ENCODE measurements at regions of chr17 and their contacts with region 1.

Region 1: GRCh38 chr17:66737524-66737923 is 97.4 kb upstream of the CACNG5 start:
- DNase-seq: peak in 1 of 2 experiments; percentile 19
- H3K4me3 ChIP-seq: no peak overlapping the region
- H3K27ac ChIP-seq: no peak overlapping the region
- H3K4me1 ChIP-seq: peaks cover 0 to 4% (median 3%) of the 10 kb centered on the region in 4 experiments; a peak in 2 of 7 replicates
- H3K27me3 ChIP-seq: no peaks in the 10 kb centered on the region
- CTCF ChIP-seq: peak; percentile 78 to 83 (median 78)
- EP300 ChIP-seq: no peak
- POLR2A ChIP-seq: no peak
- RAD21 ChIP-seq: peak; percentile 88 to 92

Region 2: DNA sequence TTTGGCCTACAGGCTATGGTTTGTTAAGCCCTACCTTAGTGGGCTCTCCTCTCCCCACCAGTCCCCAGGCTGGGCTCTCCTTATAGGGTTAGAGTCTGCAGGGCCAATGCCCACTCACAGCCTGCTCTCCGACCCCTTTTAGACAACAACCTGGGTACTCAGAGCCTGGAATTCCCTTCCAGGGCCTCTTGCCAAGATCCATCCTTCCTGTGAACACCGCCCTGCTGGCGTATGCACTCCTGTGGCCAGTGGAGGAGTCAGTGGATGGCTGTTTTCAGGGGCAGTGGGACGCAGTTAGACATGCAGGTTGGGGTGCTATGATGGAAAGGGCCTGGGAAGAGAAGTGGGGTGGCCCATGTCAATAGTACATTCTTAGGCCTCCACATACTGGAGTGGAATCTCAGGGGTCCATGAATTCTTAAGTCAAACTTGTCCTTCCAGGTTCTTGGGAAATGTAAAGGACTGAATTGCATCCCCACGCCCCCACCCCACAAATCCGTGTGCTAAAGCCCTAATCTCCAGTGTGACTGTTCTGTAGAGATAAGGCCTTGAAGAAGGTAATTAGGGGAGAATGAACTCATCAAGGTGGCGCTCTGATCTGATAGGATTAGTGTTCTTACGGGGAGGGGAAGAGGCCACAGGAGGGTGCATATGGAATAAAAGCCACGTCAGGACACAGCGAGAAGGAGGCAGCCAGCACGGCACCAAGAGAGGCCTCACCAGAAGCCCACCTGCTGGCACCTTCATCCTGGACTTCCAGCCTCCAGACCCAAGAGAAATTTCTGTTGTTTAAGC is 15.8 kb after region 1 on chr17:
- CTCF ChIA-PET with region 1: interaction called, 10 read pairs
- POLR2A ChIA-PET with region 1: no interaction called
- DNase-seq: no peak
- H3K4me3 ChIP-seq: no peak overlapping the region
- H3K27ac ChIP-seq: no peak overlapping the region
- H3K4me1 ChIP-seq: peaks cover 0 to 2% (median 1%) of the 10 kb centered on the region in 4 experiments; a peak in 2 of 7 replicates
- H3K27me3 ChIP-seq: no peaks in the 10 kb centered on the region; a peak in 1 of 7 replicates
- CTCF ChIP-seq: no peak
- EP300 ChIP-seq: no peak
- POLR2A ChIP-seq: no peak
- RAD21 ChIP-seq: no peak

Region 3: DNA sequence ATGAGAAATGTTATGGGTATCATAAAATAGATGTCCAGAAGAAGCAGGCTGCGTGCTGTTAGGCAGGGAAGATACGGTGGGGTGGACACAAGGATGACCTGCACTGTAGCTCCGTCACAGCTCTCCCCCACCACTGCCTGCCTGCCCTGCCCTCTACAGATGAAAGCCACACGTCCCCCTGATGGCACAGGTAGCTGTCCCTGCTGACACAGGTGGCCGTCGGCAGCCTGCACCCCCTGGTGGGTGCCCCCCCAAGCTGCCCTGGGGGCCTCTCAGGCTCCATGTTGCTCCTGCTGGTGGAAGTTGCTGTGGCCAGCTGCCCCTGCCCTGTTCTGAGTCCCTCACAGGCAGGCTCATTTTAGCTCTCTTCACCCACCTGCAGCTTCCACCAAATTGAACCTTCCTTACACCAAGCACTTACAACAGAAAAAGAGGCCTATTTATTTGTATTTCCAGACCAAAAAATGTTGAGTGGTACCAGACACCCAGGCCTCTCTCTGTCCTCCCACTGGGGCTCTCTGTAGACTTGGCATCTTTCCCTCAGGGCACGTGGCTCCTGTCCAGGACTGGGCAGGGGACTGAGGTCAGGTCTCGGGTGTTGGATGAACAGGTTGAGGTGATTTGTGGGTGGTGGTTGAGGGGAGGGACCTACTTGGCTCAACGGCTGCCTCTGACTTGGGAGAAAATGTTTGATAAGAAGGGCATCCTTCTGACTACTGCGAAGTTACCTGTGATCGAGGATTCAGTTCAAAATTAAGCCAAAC is 47.3 kb after region 1 on chr17:
- CTCF ChIA-PET with region 1: interaction called, 10 read pairs
- POLR2A ChIA-PET with region 1: no interaction called
- DNase-seq: no peak
- H3K4me3 ChIP-seq: no peak overlapping the region
- H3K27ac ChIP-seq: no peak overlapping the region
- H3K4me1 ChIP-seq: peaks cover 0 to 15% (median 6%) of the 10 kb centered on the region in 4 experiments; a peak in 4 of 7 replicates
- H3K27me3 ChIP-seq: no peaks in the 10 kb centered on the region
- CTCF ChIP-seq: no peak
- EP300 ChIP-seq: no peak
- POLR2A ChIP-seq: no peak
- RAD21 ChIP-seq: no peak

Region 4: DNA sequence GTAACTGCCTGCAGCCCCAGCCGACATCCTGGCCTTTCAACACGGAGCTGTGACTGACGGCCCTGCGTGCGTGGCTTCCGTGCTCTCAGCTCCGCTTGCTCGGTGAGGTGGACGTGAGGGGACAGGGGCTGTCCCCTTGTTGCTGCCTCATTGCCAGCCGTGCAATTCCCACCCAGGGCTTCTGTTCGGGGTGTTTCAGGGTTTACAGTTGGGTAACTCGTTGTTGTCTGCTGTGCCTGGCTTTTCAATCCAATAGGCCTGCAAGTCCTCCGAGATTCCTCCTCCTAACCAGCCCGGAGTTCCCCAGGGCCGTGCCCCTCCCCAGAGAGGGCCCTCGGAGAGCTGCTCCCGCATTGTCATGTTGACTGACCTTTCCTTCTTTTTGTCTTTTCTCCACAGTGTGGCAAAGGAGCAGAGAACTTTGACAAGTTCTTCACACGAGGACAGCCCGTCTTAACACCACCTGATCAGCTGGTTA is 66.0 kb after region 1 on chr17:
- CTCF ChIA-PET with region 1: interaction called, 13 read pairs
- POLR2A ChIA-PET with region 1: interaction called, 3 read pairs
- DNase-seq: peak; percentile 17 to 60
- H3K4me3 ChIP-seq: no peak overlapping the region
- H3K27ac ChIP-seq: peak overlapping the region; percentile 1; the same call in 1 of the 2 replicates
- H3K4me1 ChIP-seq: peaks cover 12 to 17% (median 13%) of the 10 kb centered on the region in 4 experiments
- H3K27me3 ChIP-seq: no peaks in the 10 kb centered on the region
- CTCF ChIP-seq: no peak
- EP300 ChIP-seq: no peak
- POLR2A ChIP-seq: no peak
- RAD21 ChIP-seq: no peak

Region 5: DNA sequence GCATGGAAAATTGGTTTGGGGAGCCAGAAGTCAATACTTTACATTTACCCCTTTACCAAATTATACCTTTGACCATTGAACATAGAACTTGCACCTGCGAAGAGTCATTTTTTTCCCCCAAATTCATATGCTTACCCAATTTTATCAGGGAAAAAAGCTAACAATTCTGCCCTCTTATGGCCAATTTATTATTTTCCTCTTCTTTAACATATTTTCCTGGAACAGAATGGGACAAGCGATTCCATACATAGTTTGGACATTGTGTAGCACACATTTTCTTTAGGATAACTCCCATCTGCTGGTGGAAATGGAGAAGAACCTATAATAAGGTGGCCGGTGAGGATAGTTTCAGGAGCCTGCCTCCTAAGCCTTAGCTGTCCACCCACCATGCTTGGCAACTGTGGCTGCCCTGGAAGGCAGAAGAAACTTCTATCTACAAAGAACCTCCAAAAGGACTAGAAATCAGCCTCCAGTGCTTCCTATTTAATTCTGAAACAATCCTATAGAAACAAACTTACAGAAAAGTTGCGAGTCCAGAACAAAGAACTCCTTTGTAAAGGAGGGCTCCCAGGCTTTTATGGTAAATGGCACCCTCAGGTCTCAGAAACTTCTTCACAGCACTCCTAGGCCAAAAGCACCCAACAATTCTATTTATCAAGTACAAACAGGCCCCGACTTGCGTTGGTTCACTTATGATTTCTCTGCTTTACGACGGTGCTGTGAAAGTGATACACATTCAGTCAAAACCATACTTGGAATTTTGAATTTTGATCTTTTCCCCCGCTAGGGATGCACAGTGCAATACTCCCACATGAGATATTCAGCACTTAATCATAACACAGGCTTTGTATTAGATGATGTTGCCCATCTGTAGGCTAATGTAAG is 162.8 kb after region 1 on chr17:
- CTCF ChIA-PET with region 1: interaction called, 14 read pairs
- POLR2A ChIA-PET with region 1: no interaction called
- DNase-seq: no peak
- H3K4me3 ChIP-seq: no peak overlapping the region
- H3K27ac ChIP-seq: no peak overlapping the region
- H3K4me1 ChIP-seq: no peaks in the 10 kb centered on the region
- H3K27me3 ChIP-seq: no peaks in the 10 kb centered on the region
- CTCF ChIP-seq: peak in 1 of 3 experiments; percentile 5; a peak in 1 of 4 replicates
- EP300 ChIP-seq: no peak
- POLR2A ChIP-seq: no peak
- RAD21 ChIP-seq: peak in 1 of 2 experiments; percentile 33; a peak in 1 of 4 replicates

Region 6: DNA sequence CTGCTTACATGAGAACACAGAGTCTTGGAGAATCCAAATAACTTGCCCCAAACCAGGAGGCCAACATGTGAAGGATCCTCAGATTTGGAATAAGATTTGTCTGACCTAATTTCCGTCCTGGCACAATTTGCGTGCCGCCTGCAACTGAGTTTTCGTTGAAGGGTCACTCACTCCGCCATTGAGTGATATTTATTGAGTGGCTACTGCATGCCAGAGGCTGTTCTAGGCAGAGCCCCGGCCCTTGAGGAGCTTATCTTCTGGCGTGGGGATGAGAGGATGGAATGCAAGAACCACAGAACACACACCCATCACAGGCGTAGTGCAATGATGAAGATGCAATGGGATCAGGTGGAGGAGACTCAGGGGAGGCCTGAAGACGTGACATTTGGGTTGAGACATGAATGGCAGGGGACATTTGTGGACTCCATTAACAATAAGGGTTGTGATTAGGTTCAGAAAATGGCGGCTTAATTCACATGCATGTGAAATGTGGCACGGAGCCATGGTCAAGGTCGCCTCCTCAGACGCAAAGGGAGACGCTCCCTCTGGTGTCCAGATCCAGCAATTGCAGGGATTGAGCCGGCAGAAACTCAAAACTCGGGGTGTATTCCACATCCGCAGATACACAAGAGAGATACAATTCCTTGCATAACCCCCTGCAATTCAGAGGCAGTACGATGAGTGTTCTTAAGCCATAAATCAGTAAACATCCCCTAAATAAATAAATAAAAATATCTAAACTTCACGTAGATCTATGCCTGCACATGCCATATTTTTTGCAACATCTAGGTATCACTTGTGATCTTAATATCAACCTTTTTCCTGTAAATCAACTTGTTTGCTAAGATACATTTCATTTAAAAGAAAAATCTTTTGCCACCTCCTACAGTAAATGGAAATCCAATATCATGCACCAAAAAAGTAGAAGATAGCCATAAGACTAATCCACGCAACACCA is 169.1 kb after region 1 on chr17:
- CTCF ChIA-PET with region 1: interaction called, 14 read pairs
- POLR2A ChIA-PET with region 1: no interaction called
- DNase-seq: peak; percentile 54 to 85
- H3K4me3 ChIP-seq: no peak overlapping the region
- H3K27ac ChIP-seq: no peak overlapping the region
- H3K4me1 ChIP-seq: no peaks in the 10 kb centered on the region
- H3K27me3 ChIP-seq: peaks cover 0 to 6% (median 2%) of the 10 kb centered on the region in 4 experiments; a peak in 1 of 7 replicates
- CTCF ChIP-seq: peak; percentile 88 to 92 (median 90)
- EP300 ChIP-seq: no peak
- POLR2A ChIP-seq: no peak
- RAD21 ChIP-seq: peak; percentile 97 to 98

Measured in H1 (cell line).